Activated naive CD4-positive, alpha-beta T cell treated with anti-CD3 and anti-CD28 coated beads, Interleukin-2, amount 10 ng/mL, durations not matched to agents 7 days and 5 days (primary cell): ENCODE measurements at regions of chr1 and their contacts with region 1.

Region 1: GRCh38 chr1:224333309-224333926 is 3.4 kb upstream of the NVL start:
- DNase-seq: peak; percentile 48
- H3K4me3 Mint-ChIP-seq: no peak overlapping the region
- H3K27ac Mint-ChIP-seq: no peak overlapping the region
- H3K4me1 Mint-ChIP-seq: peaks cover 38% of the 10 kb centered on the region
- H3K27me3 Mint-ChIP-seq: peaks cover 3% of the 10 kb centered on the region

Region 2: DNA sequence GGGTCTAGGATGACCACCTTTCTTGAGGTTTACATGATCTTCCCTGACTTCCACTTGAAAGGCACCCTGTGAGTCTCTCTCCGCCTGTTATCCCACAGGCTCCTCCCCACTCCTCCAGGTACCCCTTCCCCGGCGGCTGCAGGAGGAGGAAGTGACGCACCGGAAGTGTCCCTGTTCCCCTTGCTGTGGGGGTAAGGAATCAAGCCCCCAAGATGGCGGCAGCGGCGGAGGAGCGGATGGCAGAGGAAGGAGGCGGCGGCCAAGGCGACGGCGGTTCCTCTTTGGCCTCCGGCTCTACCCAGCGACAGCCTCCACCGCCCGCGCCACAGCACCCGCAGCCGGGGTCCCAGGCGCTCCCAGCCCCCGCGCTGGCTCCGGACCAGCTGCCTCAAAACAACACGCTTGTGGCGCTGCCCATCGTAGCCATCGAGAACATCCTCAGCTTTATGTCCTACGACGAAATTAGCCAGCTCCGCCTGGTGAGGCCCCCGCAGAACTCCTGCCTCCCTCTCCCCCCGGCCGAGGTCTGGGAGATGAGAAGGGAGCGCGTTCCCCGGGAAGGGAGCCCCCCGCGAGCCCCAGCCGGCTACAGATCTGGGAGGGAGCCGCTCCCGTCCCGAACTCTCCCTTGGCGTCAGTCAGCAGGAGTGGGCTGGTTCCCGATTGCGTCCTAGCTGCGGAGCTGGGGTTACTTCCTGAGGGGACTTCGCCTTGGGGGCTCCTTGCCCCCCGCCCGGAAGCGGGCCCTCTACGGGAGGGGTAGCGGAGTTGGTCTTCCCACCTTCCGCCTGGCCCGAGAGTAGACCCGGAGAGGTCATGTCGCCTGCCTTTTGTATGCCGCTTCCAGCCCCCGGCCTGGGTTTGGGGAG is 219.3 kb before region 1 on chr1 and contains the start of gene FBXO28:
- CTCF ChIA-PET with region 1: interaction called, 61 read pairs
- DNase-seq: peak; percentile 98
- H3K4me3 Mint-ChIP-seq: peak within 1 kb of the TSS; percentile 79
- H3K27ac Mint-ChIP-seq: peak within 1 kb of the TSS; percentile 91
- H3K4me1 Mint-ChIP-seq: peaks cover 30% of the 10 kb centered on the region
- H3K27me3 Mint-ChIP-seq: peaks cover 20% of the 10 kb centered on the region